B cell (primary cell): ENCODE measurements at regions of chr5 and their contacts with region 1.

Region 1: GRCh38 chr5:179974946-179975712 is 67.4 kb upstream of the TBC1D9B start:
- DNase-seq: peak; percentile 84
- ATAC-seq: peak; percentile 83
- H3K4me3 ChIP-seq: no peak overlapping the region
- H3K4me3 Mint-ChIP-seq: peak overlapping the region; percentile 31
- H3K27ac ChIP-seq: peak overlapping the region; percentile 22 to 58
- H3K27ac Mint-ChIP-seq: peak overlapping the region; percentile 92
- H3K4me1 ChIP-seq: peaks cover 29 to 41% of the 10 kb centered on the region in 2 donors
- H3K4me1 Mint-ChIP-seq: peaks cover 49% of the 10 kb centered on the region
- H3K27me3 ChIP-seq: no peaks in the 10 kb centered on the region
- H3K27me3 Mint-ChIP-seq: no peaks in the 10 kb centered on the region
- CTCF ChIP-seq: peak; percentile 74

Region 2: DNA sequence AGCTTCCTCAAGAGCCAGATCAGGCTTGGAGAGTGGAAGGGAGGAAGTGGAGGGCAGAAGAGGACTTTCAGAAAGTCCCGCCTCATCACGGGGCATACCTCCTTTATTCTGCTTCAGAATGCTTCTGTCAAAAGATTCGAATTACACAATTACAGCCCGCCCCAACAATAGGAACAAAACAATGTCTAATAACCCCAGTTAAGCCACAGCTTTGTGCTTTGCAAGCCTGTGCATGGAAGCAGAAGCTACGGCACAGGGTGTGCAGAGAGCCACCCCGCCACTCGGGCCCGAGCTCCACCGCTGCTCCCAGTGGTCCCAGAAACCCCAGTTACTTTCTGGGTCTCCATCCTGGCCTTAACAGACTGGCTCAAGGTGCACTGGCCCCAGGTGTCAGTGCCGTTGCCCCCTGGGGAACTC is 375.1 kb before region 1 on chr5:
- CTCF ChIA-PET with region 1: no interaction called
- POLR2A ChIA-PET with region 1: no interaction called
- intact Hi-C with region 1: no loop called
- DNase-seq: no peak
- ATAC-seq: no peak
- H3K4me3 ChIP-seq: no peak overlapping the region
- H3K4me3 Mint-ChIP-seq: no peak overlapping the region
- H3K27ac ChIP-seq: no peak overlapping the region
- H3K27ac Mint-ChIP-seq: no peak overlapping the region
- H3K4me1 ChIP-seq: no peaks in the 10 kb centered on the region
- H3K4me1 Mint-ChIP-seq: no peaks in the 10 kb centered on the region
- H3K27me3 ChIP-seq: no peaks in the 10 kb centered on the region
- H3K27me3 Mint-ChIP-seq: no peaks in the 10 kb centered on the region
- CTCF ChIP-seq: no peak

Region 3: GRCh38 chr5:179763215-179763945 is 211.7 kb before region 1 on chr5:
- CTCF ChIA-PET with region 1: interaction called, 25 read pairs
- POLR2A ChIA-PET with region 1: no interaction called
- intact Hi-C with region 1: loop called (anchors 1 kb)
- DNase-seq: peak; percentile 71
- ATAC-seq: peak; percentile 62
- H3K4me3 ChIP-seq: no peak overlapping the region
- H3K4me3 Mint-ChIP-seq: no peak overlapping the region
- H3K27ac ChIP-seq: no peak overlapping the region
- H3K27ac Mint-ChIP-seq: no peak overlapping the region
- H3K4me1 ChIP-seq: peaks cover 17 to 32% of the 10 kb centered on the region in 2 donors
- H3K4me1 Mint-ChIP-seq: peaks cover 45% of the 10 kb centered on the region
- H3K27me3 ChIP-seq: no peaks in the 10 kb centered on the region
- H3K27me3 Mint-ChIP-seq: no peaks in the 10 kb centered on the region
- CTCF ChIP-seq: peak; percentile 96

Region 4: DNA sequence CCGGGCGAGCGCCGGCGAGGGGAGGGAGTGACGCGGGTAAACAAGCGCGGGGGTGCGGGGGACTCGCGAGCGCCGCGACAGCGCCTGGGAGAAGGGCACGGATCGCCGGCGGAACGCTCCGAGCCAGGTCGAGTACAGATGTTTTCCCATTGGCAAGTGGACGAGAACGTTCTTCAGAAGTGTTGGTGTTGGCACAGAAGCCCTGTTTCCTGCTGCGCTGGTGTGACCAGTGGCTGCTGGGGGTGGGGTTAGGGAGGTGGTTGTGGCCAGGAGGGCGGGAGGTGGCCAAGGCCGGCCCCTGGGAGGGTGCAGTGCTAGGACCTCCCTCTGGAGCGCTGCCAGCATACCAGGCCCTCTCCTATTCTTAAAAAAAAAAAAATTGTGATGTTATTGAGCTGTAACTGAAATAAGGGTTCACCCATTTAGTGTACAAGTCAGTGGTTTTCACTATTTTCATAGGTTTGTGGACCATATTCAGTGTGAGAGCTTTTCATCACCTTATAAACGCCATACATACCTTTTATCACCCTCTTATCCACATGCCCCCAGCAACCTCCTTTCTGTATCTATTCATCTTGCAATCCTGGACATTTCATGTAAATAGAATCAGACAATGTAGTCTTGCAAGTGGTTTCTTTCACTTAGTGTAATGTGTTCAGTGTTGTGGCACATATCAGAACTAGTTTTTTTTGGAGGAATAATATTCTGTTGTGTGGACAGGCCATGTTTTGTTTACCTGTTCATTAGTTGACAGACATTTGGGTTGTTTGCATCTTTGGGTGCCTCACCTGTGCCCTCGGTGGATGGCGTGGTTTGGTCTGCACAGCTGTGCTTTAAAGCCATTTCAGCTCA is 153.3 kb before region 1 on chr5:
- CTCF ChIA-PET with region 1: interaction called, 3 read pairs
- POLR2A ChIA-PET with region 1: interaction called, 5 read pairs
- intact Hi-C with region 1: loop called (anchors 1 kb)
- DNase-seq: peak; percentile 89
- ATAC-seq: peak; percentile 48
- H3K4me3 ChIP-seq: peak overlapping the region; percentile 22 to 94 (median 81)
- H3K4me3 Mint-ChIP-seq: peak overlapping the region; percentile 98
- H3K27ac ChIP-seq: peak overlapping the region; percentile 91 to 98
- H3K27ac Mint-ChIP-seq: peak overlapping the region; percentile 98
- H3K4me1 ChIP-seq: peaks cover 36 to 47% of the 10 kb centered on the region in 2 donors
- H3K4me1 Mint-ChIP-seq: peaks cover 55% of the 10 kb centered on the region
- H3K27me3 ChIP-seq: peaks cover 0 to 4% (median 0%) of the 10 kb centered on the region in 4 experiments
- H3K27me3 Mint-ChIP-seq: no peaks in the 10 kb centered on the region
- CTCF ChIP-seq: no peak

Region 5: GRCh38 chr5:179866258-179867078 is 108.7 kb before region 1 on chr5:
- CTCF ChIA-PET with region 1: interaction called, 13 read pairs
- POLR2A ChIA-PET with region 1: interaction called, 3 read pairs
- intact Hi-C with region 1: loop called (anchors 1 kb)
- DNase-seq: peak; percentile 30
- ATAC-seq: peak; percentile 24
- H3K4me3 ChIP-seq: no peak overlapping the region
- H3K4me3 Mint-ChIP-seq: no peak overlapping the region
- H3K27ac ChIP-seq: no peak overlapping the region
- H3K27ac Mint-ChIP-seq: no peak overlapping the region
- H3K4me1 ChIP-seq: no peaks in the 10 kb centered on the region
- H3K4me1 Mint-ChIP-seq: peaks cover 3% of the 10 kb centered on the region
- H3K27me3 ChIP-seq: no peaks in the 10 kb centered on the region
- H3K27me3 Mint-ChIP-seq: no peaks in the 10 kb centered on the region
- CTCF ChIP-seq: no peak

Region 6: DNA sequence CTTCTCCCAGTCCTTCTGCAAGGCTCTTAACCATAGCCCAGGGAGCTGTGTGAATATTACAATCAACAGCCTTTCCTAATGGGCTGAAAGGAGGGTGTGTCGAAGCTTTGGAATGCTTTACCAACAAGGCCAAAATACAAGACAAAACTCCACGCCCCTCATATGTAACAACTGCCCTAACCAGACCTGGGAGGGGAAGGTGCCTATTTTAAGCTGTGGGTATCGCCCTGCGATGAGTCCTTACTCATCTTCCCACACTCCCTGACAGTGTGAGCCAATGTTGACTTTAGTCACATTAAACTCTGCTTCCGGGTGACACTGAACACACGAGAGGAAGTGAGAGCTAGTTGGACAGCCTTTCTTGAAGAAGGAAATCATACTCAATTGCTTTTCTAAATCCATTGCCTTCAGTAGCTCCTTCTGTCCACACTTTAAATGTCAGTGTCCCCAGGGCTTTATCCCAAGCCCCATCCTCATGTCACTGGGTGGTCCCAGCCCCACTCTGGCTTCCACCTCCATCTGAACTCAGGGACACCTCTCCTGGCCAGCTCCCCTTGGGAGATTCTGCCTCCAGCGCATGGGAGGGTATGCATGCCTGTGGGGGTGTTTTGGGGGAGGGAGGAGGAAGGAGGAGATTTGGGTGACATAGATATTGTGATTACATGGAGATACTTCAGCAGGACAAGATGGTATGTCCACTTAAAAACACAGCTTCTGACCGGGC is 60.9 kb before region 1 on chr5:
- CTCF ChIA-PET with region 1: interaction called, 24 read pairs
- POLR2A ChIA-PET with region 1: interaction called, 3 read pairs
- intact Hi-C with region 1: no loop called
- DNase-seq: no peak
- ATAC-seq: peak; percentile 20
- H3K4me3 ChIP-seq: no peak overlapping the region
- H3K4me3 Mint-ChIP-seq: no peak overlapping the region
- H3K27ac ChIP-seq: no peak overlapping the region
- H3K27ac Mint-ChIP-seq: no peak overlapping the region
- H3K4me1 ChIP-seq: peaks cover 5 to 20% of the 10 kb centered on the region in 2 donors
- H3K4me1 Mint-ChIP-seq: peaks cover 18% of the 10 kb centered on the region
- H3K27me3 ChIP-seq: no peaks in the 10 kb centered on the region
- H3K27me3 Mint-ChIP-seq: peaks cover 5% of the 10 kb centered on the region
- CTCF ChIP-seq: no peak

Region 7: GRCh38 chr5:180026320-180026719 is 51.2 kb after region 1 on chr5:
- CTCF ChIA-PET with region 1: no interaction called
- POLR2A ChIA-PET with region 1: no interaction called
- intact Hi-C with region 1: no loop called
- DNase-seq: no peak
- ATAC-seq: no peak
- H3K4me3 ChIP-seq: no peak overlapping the region
- H3K4me3 Mint-ChIP-seq: no peak overlapping the region
- H3K27ac ChIP-seq: no peak overlapping the region
- H3K27ac Mint-ChIP-seq: no peak overlapping the region
- H3K4me1 ChIP-seq: no peaks in the 10 kb centered on the region
- H3K4me1 Mint-ChIP-seq: no peaks in the 10 kb centered on the region
- H3K27me3 ChIP-seq: no peaks in the 10 kb centered on the region
- H3K27me3 Mint-ChIP-seq: no peaks in the 10 kb centered on the region
- CTCF ChIP-seq: no peak

Region 8: GRCh38 chr5:180090098-180090768 is 115.1 kb after region 1 on chr5:
- CTCF ChIA-PET with region 1: no interaction called
- POLR2A ChIA-PET with region 1: no interaction called
- intact Hi-C with region 1: loop called (anchors 5 kb)
- DNase-seq: peak; percentile 87
- ATAC-seq: peak; percentile 95
- H3K4me3 ChIP-seq: peak overlapping the region; percentile 48 to 65 (median 58)
- H3K4me3 Mint-ChIP-seq: peak overlapping the region; percentile 90
- H3K27ac ChIP-seq: peak overlapping the region in 1 of 2 donors; percentile 56
- H3K27ac Mint-ChIP-seq: peak overlapping the region; percentile 82
- H3K4me1 ChIP-seq: peaks cover 3 to 11% of the 10 kb centered on the region in 2 donors
- H3K4me1 Mint-ChIP-seq: peaks cover 12% of the 10 kb centered on the region
- H3K27me3 ChIP-seq: peaks cover 0 to 9% (median 3%) of the 10 kb centered on the region in 4 experiments
- H3K27me3 Mint-ChIP-seq: peaks cover 10% of the 10 kb centered on the region
- CTCF ChIP-seq: peak; percentile 82